ENCODE measurements at regions of chr20 and their contacts with region 1.

Region 1: DNA sequence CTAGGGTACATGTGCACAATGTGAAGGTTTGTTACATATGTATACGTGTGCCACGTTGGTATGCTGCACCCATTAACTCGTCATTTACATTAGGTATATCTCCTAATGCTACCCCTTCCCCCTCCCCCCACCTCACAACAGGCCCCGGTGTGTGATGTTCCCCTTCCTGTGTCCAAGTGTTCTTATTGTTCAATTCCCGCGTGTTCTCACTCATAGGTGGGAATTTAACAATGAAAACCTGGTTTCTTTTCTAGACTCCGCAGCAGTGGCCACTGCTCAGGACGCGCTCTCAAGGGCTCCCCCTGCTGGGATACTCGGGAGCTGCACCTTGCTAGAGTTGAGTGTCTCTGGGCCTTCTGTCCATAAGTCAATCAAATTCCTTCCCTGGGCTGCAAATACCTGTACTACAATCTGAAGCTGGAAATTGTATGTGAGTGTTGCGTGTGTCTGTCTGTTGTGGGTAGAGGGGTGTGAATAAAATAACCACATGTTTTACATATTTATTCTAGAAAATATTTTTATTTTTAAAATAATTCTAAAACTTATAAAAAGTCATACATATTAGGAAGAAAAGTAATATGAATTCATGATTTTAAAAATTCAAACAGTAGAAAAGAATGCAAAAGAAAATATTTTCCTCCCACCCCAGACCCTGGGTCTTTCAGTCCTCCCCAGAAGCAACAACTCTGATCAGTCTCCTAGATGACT is 8.2 kb upstream of the CEP250 start:
- DNase-seq: peak; percentile 28 to 92
- H3K4me3 ChIP-seq: peak overlapping the region; percentile 56 to 65
- H3K27ac ChIP-seq: no peak overlapping the region
- H3K4me1 ChIP-seq: peaks cover 0 to 2% of the 10 kb centered on the region in 2 donors
- H3K27me3 ChIP-seq: no peaks in the 10 kb centered on the region
- CTCF ChIP-seq: peak; percentile 73 to 99 (median 98)

Region 2: DNA sequence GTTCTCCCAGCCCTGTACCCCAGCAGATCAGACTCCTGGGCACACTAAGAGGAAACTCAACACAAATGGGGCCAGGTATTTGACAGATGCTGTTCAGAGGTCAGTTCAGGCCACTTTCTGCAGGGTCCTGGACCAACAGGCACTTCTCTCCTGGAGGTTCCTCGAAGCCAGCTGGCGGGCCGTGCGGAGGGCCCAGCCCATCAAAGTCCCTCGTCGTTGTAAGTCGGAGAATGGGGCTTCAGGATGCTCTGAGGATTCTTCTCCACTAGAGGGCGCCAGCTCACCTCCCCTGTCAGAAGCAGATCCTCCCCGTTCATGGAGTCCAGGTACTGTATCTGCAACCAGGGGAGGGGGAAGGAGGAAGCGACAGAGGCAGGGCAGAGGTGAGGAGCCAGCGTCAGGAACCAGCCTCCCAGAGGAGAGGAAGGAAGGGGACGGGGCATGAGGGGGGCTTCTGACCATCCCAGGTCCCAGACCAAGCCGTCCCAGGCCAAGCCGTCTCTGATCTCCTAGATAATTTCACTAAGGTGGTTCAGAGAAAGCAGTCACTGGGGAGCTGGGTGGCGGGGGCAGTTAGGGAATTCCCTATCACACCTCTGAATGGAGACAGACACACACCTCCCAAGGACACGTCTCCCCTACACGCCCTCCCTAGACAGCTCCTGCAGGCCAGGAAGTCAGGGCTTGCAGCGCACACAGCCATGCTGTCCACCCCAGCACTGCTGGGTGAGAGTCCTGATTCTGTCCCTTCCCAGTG is 143.3 kb before region 1 on chr20:
- intact Hi-C with region 1: loop called (anchors 1 kb)
- DNase-seq: peak in 1 of 2 donors; percentile 89
- H3K4me3 ChIP-seq: no peak overlapping the region
- H3K27ac ChIP-seq: no peak overlapping the region
- H3K4me1 ChIP-seq: peaks cover 19 to 29% of the 10 kb centered on the region in 2 donors
- H3K27me3 ChIP-seq: no peaks in the 10 kb centered on the region
- CTCF ChIP-seq: peak; percentile 77 to 95 (median 94)

Measured in ascending aorta (tissue), 2 donors.